ENCODE measurements at regions of chr16 and their contacts with region 1.

Region 1: GRCh38 chr16:51562891-51563290 is 411.8 kb upstream of the SALL1 start:
- DNase-seq: no peak
- H3K4me3 ChIP-seq: no peak overlapping the region
- CTCF ChIP-seq: no peak

Region 2: GRCh38 chr16:51524555-51525373 is 38.1 kb before region 1 on chr16:
- in situ Hi-C with region 1: loop called (anchors 5 kb)
- DNase-seq: peak; percentile 86
- H3K4me3 ChIP-seq: no peak overlapping the region
- CTCF ChIP-seq: peak; percentile 27

Region 3: GRCh38 chr16:51666821-51667220 is 103.9 kb after region 1 on chr16:
- in situ Hi-C with region 1: no loop called
- DNase-seq: peak; percentile 64
- H3K4me3 ChIP-seq: no peak overlapping the region
- CTCF ChIP-seq: no peak

Measured in astrocyte of the cerebellum (primary cell).